MCF 10A (cell line): ENCODE measurements at regions of chr10 and their contacts with region 1.

Region 1: DNA sequence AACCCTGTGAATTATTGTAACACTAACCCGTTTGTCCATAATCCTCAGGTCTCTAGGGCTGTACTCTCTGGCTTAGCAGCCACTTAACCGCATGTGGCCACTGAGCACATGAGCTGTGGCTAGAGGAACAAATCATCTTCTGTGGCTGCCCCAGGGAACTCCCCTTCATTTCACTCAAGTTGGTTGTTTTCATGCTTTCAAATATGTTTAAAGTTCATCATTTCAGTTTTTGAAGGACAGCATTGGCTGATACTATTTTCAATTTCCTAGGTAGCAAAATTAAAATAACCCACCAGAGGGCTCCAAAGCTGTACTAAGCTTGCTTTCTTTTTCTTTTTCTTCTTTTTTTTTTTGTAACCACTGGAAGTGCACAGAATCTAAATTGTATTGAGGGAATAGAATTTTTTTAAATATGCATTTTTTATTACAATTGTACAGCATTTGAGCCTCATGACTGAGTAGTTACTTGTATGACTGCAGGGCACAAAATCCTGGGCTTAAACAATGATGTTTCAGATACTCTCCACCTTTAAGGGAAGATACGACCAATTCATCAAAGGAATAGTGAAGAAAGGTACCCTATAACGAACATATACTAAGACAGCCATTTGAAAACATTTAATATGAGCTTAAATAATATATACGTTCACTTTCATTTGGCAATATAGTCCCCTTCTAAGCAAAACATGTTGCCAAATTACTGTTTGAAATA is 38.6 kb downstream of the MRC1 start:
- DNase-seq: peak; percentile 35
- H3K4me3 Mint-ChIP-seq: no peak overlapping the region
- H3K27ac Mint-ChIP-seq: no peak overlapping the region
- H3K4me1 Mint-ChIP-seq: peaks cover 9% of the 10 kb centered on the region
- H3K27me3 Mint-ChIP-seq: no peaks in the 10 kb centered on the region
- CTCF ChIP-seq: peak; percentile 38

Region 2: DNA sequence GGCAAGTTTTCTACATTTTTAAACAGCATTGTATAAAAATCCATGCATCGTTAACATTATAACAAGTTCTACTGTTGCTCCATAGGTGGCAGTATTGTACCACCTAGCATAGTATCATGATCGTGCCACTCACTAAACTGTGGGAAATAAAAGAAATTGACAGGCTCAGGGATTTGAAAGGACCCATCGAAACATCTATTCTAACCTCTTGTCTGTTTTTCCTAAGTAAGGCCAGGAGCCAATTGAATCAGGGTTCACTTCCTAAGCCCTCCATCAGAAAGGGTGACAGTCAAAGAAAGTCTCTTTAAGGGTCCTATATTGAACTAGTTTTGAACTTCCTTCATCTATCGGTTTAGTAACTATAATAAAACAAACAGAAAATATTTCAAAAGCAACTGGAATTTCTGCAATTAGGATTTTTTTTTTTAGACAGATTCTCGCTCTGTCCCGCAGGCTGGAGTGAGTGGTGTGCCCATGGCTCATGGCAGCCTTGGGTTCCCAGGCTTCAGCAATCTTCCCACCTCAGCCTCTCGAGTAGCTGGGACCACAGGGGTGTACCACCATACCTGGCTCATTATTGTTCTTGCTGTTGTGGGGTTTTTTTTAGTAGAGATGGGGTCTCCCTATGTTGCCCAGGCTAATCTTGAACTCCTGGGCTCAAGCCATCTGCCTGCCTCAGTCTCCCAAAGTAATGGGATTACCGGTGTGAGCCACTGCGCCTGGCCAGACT is 240.0 kb before region 1 on chr10:
- CTCF ChIA-PET with region 1: interaction called, 4 read pairs
- POLR2A ChIA-PET with region 1: interaction called, 4 read pairs
- intact Hi-C with region 1: loop called (anchors 2 kb)
- DNase-seq: peak; percentile 70
- H3K4me3 Mint-ChIP-seq: no peak overlapping the region
- H3K27ac Mint-ChIP-seq: no peak overlapping the region
- H3K4me1 Mint-ChIP-seq: peaks cover 6% of the 10 kb centered on the region
- H3K27me3 Mint-ChIP-seq: no peaks in the 10 kb centered on the region
- CTCF ChIP-seq: peak; percentile 66

Region 3: DNA sequence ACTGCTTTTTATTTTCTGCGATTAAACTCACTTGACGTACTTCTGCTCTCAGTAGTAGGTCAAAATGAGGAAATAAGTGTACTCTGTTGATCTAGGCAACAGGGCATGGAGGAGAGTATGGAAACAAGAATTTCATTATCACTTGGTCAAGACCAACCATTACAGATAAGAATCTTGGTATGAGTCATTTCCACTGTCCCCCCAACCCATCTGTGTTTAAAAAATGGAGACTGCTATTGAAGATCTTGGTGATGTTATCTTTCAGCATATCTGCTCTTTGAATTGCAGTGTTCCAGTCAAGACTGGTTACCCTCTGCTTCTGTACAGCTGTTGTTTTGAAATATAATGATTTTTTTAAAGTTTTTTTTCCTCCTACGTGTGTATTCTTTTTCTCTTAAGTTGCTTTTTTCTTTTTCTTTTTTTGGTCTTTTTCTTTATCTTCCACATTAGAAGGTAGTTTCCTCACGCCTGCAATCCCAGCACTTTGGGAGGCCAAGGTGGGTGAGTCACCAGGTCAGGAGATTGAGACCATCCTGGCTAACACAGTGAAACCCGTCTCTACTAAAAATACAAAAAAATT is 192.1 kb before region 1 on chr10:
- CTCF ChIA-PET with region 1: no interaction called
- POLR2A ChIA-PET with region 1: no interaction called
- intact Hi-C with region 1: no loop called
- DNase-seq: peak; percentile 37
- H3K4me3 Mint-ChIP-seq: no peak overlapping the region
- H3K27ac Mint-ChIP-seq: peak overlapping the region; percentile 60
- H3K4me1 Mint-ChIP-seq: peaks cover 43% of the 10 kb centered on the region
- H3K27me3 Mint-ChIP-seq: no peaks in the 10 kb centered on the region
- CTCF ChIP-seq: no peak

Region 4: DNA sequence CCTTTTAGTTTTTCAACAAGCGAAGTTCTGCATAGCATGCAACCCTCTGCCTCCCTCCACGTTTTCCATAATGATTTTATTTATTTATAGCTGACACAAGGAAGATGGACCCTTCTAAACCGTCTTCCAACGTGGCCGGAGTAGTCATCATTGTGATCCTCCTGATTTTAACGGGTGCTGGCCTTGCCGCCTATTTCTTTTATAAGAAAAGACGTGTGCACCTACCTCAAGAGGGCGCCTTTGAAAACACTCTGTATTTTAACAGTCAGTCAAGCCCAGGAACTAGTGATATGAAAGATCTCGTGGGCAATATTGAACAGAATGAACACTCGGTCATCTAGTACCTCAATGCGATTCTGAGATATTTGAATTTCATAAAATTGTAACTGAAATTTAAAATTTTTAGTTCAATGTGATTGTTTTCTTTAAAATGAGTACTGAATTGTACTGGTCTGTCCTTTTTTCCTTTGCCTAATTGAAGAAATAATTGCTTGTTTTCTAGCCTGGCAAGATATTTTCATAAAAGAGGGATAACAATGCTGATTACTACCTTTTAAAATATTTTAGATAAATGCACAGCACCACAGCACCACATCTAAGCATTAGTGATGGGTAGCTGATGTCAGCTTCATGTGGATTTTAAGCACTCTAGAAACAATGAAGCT is 62.5 kb after region 1 on chr10:
- CTCF ChIA-PET with region 1: interaction called, 5 read pairs
- POLR2A ChIA-PET with region 1: no interaction called
- intact Hi-C with region 1: loop called (anchors 1 kb)
- DNase-seq: peak; percentile 74
- H3K4me3 Mint-ChIP-seq: no peak overlapping the region
- H3K27ac Mint-ChIP-seq: no peak overlapping the region
- H3K4me1 Mint-ChIP-seq: peaks cover 19% of the 10 kb centered on the region
- H3K27me3 Mint-ChIP-seq: no peaks in the 10 kb centered on the region
- CTCF ChIP-seq: peak; percentile 54

Region 5: GRCh38 chr10:18205098-18205834 is 357.5 kb after region 1 on chr10:
- CTCF ChIA-PET with region 1: interaction called, 38 read pairs
- POLR2A ChIA-PET with region 1: no interaction called
- intact Hi-C with region 1: no loop called
- DNase-seq: no peak
- H3K4me3 Mint-ChIP-seq: no peak overlapping the region
- H3K27ac Mint-ChIP-seq: no peak overlapping the region
- H3K4me1 Mint-ChIP-seq: peaks cover 5% of the 10 kb centered on the region
- H3K27me3 Mint-ChIP-seq: no peaks in the 10 kb centered on the region
- CTCF ChIP-seq: no peak

Region 6: GRCh38 chr10:18312374-18313139 is 464.8 kb after region 1 on chr10:
- CTCF ChIA-PET with region 1: interaction called, 5 read pairs
- POLR2A ChIA-PET with region 1: no interaction called
- intact Hi-C with region 1: loop called (anchors 5 kb)
- DNase-seq: peak; percentile 43
- H3K4me3 Mint-ChIP-seq: no peak overlapping the region
- H3K27ac Mint-ChIP-seq: no peak overlapping the region
- H3K4me1 Mint-ChIP-seq: peaks cover 6% of the 10 kb centered on the region
- H3K27me3 Mint-ChIP-seq: no peaks in the 10 kb centered on the region
- CTCF ChIP-seq: peak; percentile 55